Right cardiac atrium (tissue), 5 donors: ENCODE measurements at regions of chr6 and their contacts with region 1.

Region 1: DNA sequence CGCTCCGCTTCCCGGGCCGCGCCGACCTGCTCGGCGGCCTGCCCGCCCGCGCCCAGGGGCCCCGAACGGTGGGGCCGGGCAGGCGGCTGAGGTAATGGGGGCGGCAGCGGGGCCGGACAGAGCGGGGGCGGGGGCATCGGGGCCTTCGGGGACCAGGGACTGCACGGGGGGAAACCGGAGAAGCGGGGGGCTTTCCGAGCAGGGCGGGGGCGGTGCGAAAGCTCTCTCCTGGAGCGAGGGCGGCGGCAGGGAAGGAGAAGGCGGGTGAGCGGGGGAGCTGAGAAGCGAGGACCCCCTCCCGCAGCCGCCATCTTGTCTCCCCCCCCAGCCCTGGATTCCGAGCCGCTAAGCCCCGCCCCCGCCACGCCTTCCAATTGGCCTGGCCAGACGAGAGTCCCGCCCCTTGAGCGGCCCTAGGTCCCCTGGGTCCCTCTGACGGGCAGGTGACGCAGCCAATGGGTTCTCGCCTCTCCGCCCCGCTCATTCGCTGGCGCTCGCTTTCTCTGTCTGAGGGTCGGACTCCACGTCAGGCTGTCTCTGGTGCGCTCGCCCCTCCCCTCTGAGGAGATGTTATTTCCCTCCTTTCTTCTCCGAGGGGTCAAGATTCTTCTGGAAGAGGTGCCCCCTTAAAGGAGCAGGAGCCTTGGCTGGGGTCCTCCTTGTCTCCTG is 470 bp downstream of the BRPF3 start:
- DNase-seq: peak; percentile 99 to 100 (median 100)
- ATAC-seq: peak; percentile 98
- H3K4me3 ChIP-seq: peak overlapping the region; percentile 83
- H3K27ac ChIP-seq: peak overlapping the region; percentile 83
- H3K4me1 ChIP-seq: peaks cover 7% of the 10 kb centered on the region
- H3K27me3 ChIP-seq: no peaks in the 10 kb centered on the region

Region 2: DNA sequence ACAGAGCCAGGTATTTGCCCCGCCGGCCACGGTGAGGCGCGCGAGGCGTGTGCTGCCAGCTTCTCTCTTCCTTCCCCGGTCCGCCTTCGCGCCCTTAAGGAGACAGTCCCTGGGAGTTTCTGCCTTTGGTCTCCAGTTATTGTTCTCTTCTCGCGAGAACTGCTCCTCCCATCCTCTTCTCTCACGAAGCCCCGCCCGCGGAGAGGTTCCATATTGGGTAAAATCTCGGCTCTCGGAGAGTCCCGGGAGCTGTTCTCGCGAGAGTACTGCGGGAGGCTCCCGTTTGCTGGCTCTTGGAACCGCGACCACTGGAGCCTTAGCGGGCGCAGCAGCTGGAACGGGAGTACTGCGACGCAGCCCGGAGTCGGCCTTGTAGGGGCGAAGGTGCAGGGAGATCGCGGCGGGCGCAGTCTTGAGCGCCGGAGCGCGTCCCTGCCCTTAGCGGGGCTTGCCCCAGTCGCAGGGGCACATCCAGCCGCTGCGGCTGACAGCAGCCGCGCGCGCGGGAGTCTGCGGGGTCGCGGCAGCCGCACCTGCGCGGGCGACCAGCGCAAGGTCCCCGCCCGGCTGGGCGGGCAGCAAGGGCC is 169.4 kb before region 1 on chr6 and contains the start of gene MAPK14:
- intact Hi-C with region 1: loop called in 3 of 4 experiments (anchors 5 to 10 kb)
- DNase-seq: peak; percentile 99 to 100 (median 99)
- ATAC-seq: peak; percentile 96
- H3K4me3 ChIP-seq: peak within 1 kb of the TSS; percentile 86
- H3K27ac ChIP-seq: peak within 1 kb of the TSS; percentile 74
- H3K4me1 ChIP-seq: peaks cover 2% of the 10 kb centered on the region
- H3K27me3 ChIP-seq: no peaks in the 10 kb centered on the region
- total RNA-seq, gene MAPK14: 27.8 to 37.0 (median 33.7) TPM

Region 3: GRCh38 chr6:36033935-36034334 is 163.1 kb before region 1 on chr6:
- intact Hi-C with region 1: loop called in 3 of 4 experiments (anchors 5 to 10 kb)
- DNase-seq: no peak
- ATAC-seq: no peak
- H3K4me3 ChIP-seq: no peak overlapping the region
- H3K27ac ChIP-seq: no peak overlapping the region
- H3K4me1 ChIP-seq: peaks cover 6% of the 10 kb centered on the region
- H3K27me3 ChIP-seq: no peaks in the 10 kb centered on the region

Region 4: GRCh38 chr6:37303932-37304363 is 1106.9 kb after region 1 on chr6:
- intact Hi-C with region 1: no loop called
- DNase-seq: no peak
- ATAC-seq: peak; percentile 42 to 58
- H3K4me3 ChIP-seq: no peak overlapping the region
- H3K27ac ChIP-seq: no peak overlapping the region
- H3K4me1 ChIP-seq: peaks cover 5% of the 10 kb centered on the region
- H3K27me3 ChIP-seq: no peaks in the 10 kb centered on the region